Activated CD8-positive, alpha-beta T cell treated with anti-CD3 and anti-CD28 coated beads, Interleukin-2, amount 10 ng/mL, durations not matched to agents 7 days and 5 days (primary cell): ENCODE measurements at regions of chr17 and their contacts with region 1.

Region 1: DNA sequence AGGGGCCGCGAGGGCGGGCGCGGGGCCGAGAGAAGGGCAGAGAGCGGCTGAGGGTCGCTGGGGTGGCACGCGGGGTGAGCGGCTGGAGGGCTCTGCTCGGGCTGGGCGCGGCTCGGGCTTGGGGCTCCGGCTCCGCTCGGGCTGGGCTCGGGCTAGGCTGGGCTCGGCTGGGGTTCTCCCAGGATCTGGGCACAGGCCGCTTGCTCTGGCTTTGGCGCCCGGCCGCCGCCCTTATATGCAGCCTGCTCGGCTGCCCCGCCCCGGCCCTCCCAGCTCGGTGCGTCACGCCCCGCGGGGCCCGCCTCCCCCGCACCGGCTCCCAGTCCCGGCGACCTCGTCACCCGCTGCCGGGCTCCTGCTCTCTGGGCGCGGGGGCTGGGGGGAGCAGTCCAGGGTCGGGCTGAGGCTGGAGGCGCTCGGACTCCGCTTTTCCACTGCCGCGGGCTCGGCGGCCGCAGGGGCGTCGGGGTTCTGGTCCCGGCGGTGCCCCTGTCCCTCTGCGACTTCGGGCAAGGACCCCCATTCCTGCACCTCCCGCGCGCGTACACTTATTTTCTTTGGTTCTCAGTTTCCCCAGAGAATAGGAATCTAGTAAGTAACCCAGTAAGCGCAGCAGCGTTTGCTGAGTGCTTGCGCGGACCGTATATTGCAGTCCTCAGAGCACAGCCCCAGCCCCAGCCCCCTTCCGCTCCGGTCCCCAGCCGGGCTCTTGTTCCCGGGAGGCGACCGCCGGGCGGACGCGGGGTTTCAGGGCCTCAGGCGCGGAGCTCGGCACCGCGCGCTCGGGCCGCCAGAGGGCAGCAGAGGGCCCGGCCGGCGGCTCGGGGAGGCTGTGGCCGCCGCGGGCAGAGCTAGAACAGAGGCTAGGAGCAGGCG is at the start of gene RASD1:
- DNase-seq: peak; percentile 84
- ATAC-seq: peak; percentile 87
- H3K4me3 Mint-ChIP-seq: peak within 1 kb of the TSS; percentile 69
- H3K27ac Mint-ChIP-seq: no peak within 1 kb of the TSS
- H3K4me1 Mint-ChIP-seq: peaks cover 18% of the 10 kb centered on the region
- H3K27me3 Mint-ChIP-seq: peaks cover 19% of the 10 kb centered on the region
- total RNA-seq, gene RASD1: 0.39 to 0.58 TPM

Region 2: DNA sequence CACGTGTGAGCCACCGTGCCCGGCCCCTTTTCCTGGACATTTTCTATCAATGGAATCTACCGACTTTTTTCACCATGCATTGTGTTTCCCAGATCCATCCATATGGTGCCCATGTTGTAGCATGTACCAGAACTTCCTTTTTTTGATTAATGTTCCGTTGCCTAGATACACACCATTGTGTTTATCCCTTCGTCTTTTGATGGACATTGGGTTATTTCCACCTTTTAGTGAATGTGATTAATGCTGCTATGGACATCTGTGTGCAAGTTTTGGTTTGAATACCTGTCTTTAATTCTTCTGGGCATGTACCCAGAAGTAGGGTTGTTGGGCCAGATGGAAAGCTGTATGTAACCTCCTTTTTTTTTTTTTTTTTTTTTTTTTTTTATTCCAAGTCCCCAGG is 113.5 kb before region 1 on chr17:
- CTCF ChIA-PET with region 1: interaction called, 10 read pairs
- POLR2A ChIA-PET with region 1: no interaction called
- DNase-seq: no peak
- ATAC-seq: no peak
- H3K4me3 Mint-ChIP-seq: no peak overlapping the region
- H3K27ac Mint-ChIP-seq: no peak overlapping the region
- H3K4me1 Mint-ChIP-seq: no peaks in the 10 kb centered on the region
- H3K27me3 Mint-ChIP-seq: peaks cover 27% of the 10 kb centered on the region

Region 3: DNA sequence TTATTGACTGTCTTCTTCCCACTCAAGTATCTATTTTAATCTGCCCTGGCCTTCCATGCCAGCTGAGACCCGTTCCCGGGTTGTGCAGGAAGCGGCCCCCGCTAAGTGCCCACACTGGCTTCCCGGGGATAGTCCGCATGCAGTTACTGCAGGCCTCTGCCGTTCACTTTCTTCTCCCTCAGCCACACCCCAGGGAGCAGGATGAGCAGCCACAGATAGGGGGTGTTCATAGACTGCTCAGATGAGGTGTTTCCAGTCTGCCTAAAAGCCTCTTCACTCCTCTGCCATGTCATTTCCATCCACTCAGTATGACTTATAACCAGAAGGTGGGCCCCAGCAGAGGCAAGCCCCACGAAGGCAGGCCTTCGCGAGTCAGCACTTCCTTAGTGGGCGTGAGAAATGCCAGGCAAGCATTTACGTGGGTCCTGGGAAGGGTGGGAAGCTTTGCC is 12.0 kb before region 1 on chr17:
- CTCF ChIA-PET with region 1: interaction called, 10 read pairs
- POLR2A ChIA-PET with region 1: no interaction called
- DNase-seq: peak; percentile 32
- ATAC-seq: peak; percentile 72
- H3K4me3 Mint-ChIP-seq: no peak overlapping the region
- H3K27ac Mint-ChIP-seq: peak overlapping the region; percentile 53
- H3K4me1 Mint-ChIP-seq: peaks cover 66% of the 10 kb centered on the region
- H3K27me3 Mint-ChIP-seq: no peaks in the 10 kb centered on the region

Region 4: DNA sequence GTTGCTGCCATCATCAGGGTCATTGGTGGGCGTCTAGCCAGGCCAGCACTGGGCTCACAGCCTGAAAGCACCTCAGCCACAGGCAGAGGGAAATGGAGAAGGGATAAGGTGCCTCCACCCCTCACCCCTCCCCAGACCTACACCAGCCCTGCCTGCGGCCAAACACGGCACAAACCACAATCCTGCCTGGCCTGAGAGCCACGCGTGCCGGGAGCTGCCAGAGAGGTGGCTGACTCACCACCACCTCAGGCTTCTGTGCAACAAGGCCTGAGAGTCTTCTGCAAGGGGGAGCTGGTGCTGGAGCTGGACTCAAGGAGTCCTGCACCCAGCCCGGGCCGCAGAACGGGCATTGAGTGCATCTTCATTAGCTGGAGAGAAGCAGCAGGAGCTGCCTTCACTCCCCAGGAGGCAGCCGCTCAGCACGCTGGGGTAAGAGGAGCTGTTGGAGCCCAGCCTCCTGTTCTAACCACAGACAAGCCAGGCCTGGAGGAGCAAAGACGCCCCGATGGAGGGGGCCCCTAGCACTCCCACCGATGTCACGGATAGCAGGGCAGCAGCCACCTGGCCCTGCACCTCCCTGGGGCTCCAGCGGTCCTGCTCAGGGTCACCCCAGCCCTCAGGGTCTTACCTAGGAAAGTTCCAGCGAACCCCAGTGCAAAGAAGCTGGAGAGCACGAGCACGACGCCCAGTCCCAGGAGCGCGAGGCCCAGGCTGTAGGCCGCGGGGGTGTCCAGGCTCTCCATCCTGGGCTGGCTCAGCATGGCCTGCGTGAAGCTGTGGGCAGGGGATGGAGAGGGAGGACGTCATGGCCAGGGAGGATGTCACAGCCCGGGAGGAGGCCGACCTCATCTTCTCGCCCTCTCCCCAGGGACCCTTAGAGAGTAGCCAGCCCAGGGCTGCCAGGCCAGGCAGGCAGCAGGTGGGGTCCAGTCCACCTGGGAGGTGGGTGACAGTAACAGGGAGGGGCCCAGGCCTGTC is 15.7 kb after region 1 on chr17:
- CTCF ChIA-PET with region 1: interaction called, 23 read pairs
- POLR2A ChIA-PET with region 1: no interaction called
- DNase-seq: no peak
- ATAC-seq: no peak
- H3K4me3 Mint-ChIP-seq: no peak overlapping the region
- H3K27ac Mint-ChIP-seq: no peak overlapping the region
- H3K4me1 Mint-ChIP-seq: peaks cover 17% of the 10 kb centered on the region
- H3K27me3 Mint-ChIP-seq: no peaks in the 10 kb centered on the region

Region 5: DNA sequence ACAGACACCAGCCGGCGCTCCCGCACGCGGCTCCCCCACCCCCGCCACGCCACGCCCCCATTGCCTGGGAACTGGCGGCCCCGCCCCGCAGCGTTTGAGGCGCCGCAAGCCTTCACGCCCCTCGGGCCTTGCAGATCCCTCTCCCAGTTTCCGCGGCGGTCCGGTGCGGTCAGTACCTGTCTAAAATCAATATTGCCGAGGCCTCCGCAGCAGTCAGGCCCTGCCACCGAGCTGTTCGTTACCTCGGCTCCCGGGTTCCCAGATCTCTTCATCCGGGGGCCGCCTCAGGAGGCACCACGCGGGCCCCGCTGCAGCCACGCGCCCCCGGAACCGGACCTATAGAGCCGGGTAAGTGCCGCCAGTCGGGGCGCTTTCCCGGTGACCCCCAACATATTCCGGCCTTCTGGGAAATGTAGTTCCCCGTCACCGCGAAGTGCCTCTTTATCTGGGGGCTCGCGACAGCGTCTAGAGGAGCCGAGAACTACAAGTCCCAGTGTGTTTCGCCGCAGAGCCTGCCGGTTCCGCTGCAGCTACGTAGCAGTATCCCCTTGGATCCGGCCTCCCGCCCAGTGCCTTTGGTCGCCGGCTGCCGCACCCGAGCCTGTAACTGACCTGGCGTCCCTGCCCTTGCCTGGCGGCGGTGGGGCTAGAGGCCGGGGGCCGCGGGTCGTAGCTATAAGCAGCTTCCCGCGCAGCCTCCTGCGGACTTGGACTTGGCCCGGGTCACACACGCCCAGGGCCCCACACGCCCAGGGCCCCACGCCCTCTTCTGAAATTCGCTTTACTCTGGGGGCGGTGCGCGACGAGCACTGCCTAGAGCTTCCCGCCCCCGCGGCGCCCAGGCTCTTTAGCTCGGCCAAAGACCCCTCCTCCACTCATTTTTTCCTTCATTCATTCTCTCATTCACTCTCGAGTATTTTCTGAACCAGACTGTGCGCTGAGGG is 95.2 kb after region 1 on chr17 and contains the start of gene PEMT:
- CTCF ChIA-PET with region 1: interaction called, 16 read pairs
- POLR2A ChIA-PET with region 1: no interaction called
- DNase-seq: peak; percentile 97
- ATAC-seq: peak; percentile 98
- H3K4me3 Mint-ChIP-seq: peak within 1 kb of the TSS; percentile 89
- H3K27ac Mint-ChIP-seq: peak within 1 kb of the TSS; percentile 94
- H3K4me1 Mint-ChIP-seq: peaks cover 25% of the 10 kb centered on the region
- H3K27me3 Mint-ChIP-seq: no peaks in the 10 kb centered on the region
- total RNA-seq, gene PEMT: 14.1 to 17.2 TPM

Region 6: DNA sequence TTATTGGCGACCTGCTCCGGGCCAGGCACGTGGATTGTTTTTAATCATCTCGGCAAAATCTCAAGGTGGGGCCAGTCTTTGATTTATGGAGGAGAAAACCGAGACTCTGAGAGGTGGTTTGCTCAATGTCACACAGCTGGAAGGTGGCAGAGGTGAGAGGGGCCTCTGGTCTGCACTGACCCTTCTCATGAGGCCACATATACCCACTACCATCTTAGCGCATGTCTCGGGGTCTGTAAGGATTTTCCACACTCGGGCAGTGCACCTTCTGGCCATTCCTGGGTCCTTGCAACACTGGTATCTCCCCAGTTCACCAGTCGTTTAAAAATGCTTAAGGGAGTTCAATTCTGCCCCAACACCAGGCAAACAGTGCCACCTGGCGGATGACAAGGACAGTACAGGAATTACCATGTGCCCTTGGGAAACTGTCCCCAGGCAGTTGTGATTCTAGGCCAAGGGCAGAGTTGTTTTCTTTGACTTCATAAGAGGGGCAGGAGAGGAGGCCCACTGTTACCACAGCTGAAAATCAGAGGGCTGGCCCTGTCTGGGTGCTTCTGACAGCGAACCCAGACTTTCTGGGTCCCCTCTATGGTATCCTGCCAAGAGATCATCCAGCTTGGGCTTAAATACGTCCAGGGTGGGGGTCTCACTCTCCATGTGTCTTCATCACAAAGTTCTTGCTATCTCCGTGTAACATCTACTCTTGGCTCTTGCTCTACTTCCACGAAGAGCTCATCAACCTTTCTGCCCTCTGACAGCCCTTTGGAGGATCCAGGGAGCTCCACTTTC is 145.4 kb after region 1 on chr17:
- CTCF ChIA-PET with region 1: interaction called, 81 read pairs
- POLR2A ChIA-PET with region 1: interaction called, 4 read pairs
- DNase-seq: peak; percentile 84
- ATAC-seq: peak; percentile 88
- H3K4me3 Mint-ChIP-seq: no peak overlapping the region
- H3K27ac Mint-ChIP-seq: no peak overlapping the region
- H3K4me1 Mint-ChIP-seq: no peaks in the 10 kb centered on the region
- H3K27me3 Mint-ChIP-seq: peaks cover under 1% of the 10 kb centered on the region